Activated B cell treated with CpG ODN at 0.5 μM for 24 hours (primary cell): ENCODE measurements at regions of chr16 and their contacts with region 1.

Region 1: DNA sequence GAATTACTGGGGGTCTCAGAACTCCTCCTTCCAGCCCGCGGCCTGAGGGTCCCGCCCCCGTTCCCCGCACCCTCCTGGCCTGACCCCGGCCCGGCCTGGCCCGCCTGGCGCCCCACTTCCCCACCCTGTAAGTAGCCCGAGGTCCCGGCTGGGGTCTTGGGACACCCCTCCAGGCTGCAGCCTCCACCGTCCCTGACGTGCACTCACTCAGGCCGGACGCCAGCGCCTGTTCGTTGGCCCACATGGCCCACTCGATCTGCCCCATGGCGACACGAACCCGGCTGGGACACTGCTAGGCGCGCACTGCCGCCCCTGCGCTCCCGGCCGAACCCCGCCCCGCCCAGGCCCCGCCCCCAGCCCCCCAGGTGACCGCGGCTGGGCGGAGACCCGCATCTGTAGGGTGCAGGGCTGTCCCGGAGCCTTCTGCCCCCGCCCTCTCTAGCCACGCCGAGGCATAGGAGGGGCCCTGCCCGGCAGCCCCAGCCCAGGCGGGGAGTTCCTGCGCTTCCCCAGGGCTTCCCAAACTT is at the start of gene CYBA:
- DNase-seq: no peak
- ATAC-seq: peak; percentile 81
- H3K4me3 Mint-ChIP-seq: peak within 1 kb of the TSS; percentile 93
- H3K27ac Mint-ChIP-seq: peak within 1 kb of the TSS; percentile 93
- H3K4me1 Mint-ChIP-seq: peaks cover 50% of the 10 kb centered on the region
- H3K27me3 Mint-ChIP-seq: no peaks in the 10 kb centered on the region
- CTCF ChIP-seq: no peak
- total RNA-seq, gene CYBA: 432 and 456 TPM in 2 replicates

Region 2: DNA sequence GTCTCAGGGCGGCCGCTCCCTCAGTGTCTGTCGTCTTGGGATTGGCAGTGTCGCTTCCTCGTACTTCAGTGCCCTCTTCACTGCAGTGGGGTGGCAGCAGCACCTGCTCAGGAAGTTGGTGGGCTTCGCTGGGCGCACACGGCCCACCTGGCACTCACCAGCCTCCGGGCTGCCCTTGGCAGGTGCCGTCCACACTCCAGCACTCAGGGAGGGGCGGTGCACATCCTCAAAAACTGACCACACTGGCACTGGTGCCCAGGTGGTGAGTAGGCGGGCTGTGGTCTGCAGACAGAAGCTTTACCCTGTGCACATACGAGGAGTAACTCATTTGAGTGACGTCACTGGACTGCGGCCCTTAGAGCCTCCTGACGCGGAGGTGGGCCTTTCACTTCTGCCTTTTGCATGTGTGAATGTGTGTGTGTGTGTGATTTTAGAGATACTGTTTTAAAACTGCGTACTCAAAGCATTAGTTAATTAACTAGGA is 605.0 kb before region 1 on chr16:
- CTCF ChIA-PET with region 1: no interaction called
- POLR2A ChIA-PET with region 1: no interaction called
- intact Hi-C with region 1: loop called (anchors 1 kb)
- DNase-seq: peak; percentile 83
- ATAC-seq: peak; percentile 72
- H3K4me3 Mint-ChIP-seq: peak overlapping the region; percentile 77
- H3K27ac Mint-ChIP-seq: peak overlapping the region; percentile 98
- H3K4me1 Mint-ChIP-seq: peaks cover 83% of the 10 kb centered on the region
- H3K27me3 Mint-ChIP-seq: no peaks in the 10 kb centered on the region
- CTCF ChIP-seq: no peak

Region 3: DNA sequence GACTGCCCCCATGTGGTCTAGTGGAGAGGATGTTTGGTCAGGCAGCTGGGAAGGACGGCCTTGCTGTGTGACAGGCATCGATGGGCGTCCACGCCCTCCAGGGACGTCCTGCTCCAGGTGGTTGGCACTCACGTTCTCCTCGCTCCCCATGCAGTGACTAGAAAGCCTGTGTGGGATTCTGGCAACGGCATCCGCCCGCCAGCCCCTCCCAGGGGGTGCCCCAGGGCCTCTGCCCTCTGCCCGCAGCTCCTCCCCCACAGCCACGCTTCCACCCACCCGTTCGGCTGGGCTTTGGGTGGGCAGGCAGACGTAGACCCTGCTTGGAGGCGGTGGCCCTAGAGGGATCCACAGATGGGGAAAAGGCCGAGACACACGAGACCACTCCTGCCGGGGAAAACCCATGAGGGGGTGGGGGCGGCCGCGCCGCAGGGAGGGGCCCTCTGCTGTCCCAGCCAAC is 17.1 kb before region 1 on chr16:
- CTCF ChIA-PET with region 1: interaction called, 3 read pairs
- POLR2A ChIA-PET with region 1: interaction called, 102 read pairs
- intact Hi-C with region 1: loop called (anchors 1 kb)
- DNase-seq: peak; percentile 64
- ATAC-seq: peak; percentile 54
- H3K4me3 Mint-ChIP-seq: peak overlapping the region; percentile 76
- H3K27ac Mint-ChIP-seq: peak overlapping the region; percentile 71
- H3K4me1 Mint-ChIP-seq: peaks cover 46% of the 10 kb centered on the region
- H3K27me3 Mint-ChIP-seq: no peaks in the 10 kb centered on the region
- CTCF ChIP-seq: no peak

Region 4: GRCh38 chr16:88686439-88687253 is 35.8 kb after region 1 on chr16 and contains the start of gene SNAI3:
- CTCF ChIA-PET with region 1: interaction called, 5 read pairs
- POLR2A ChIA-PET with region 1: interaction called, 25 read pairs
- intact Hi-C with region 1: loop called (anchors 1 kb)
- DNase-seq: peak; percentile 94
- ATAC-seq: peak; percentile 74
- H3K4me3 Mint-ChIP-seq: peak within 1 kb of the TSS; percentile 83
- H3K27ac Mint-ChIP-seq: no peak within 1 kb of the TSS
- H3K4me1 Mint-ChIP-seq: peaks cover 46% of the 10 kb centered on the region
- H3K27me3 Mint-ChIP-seq: no peaks in the 10 kb centered on the region
- CTCF ChIP-seq: no peak
- total RNA-seq, gene SNAI3: 1.5 and 2.7 TPM in 2 replicates

Region 5: GRCh38 chr16:88803264-88803987 is 152.6 kb after region 1 on chr16 and contains the start of gene CDT1:
- CTCF ChIA-PET with region 1: no interaction called
- POLR2A ChIA-PET with region 1: no interaction called
- intact Hi-C with region 1: loop called (anchors 2 kb)
- DNase-seq: peak; percentile 88
- ATAC-seq: peak; percentile 64
- H3K4me3 Mint-ChIP-seq: peak within 1 kb of the TSS; percentile 79
- H3K27ac Mint-ChIP-seq: peak within 1 kb of the TSS; percentile 79
- H3K4me1 Mint-ChIP-seq: peaks cover 22% of the 10 kb centered on the region
- H3K27me3 Mint-ChIP-seq: no peaks in the 10 kb centered on the region
- CTCF ChIP-seq: no peak
- total RNA-seq, gene CDT1: 4.3 and 5.5 TPM in 2 replicates

Region 6: GRCh38 chr16:89060207-89060794 is 409.5 kb after region 1 on chr16:
- CTCF ChIA-PET with region 1: no interaction called
- POLR2A ChIA-PET with region 1: no interaction called
- intact Hi-C with region 1: loop called (anchors 1 kb)
- DNase-seq: peak; percentile 55
- ATAC-seq: peak; percentile 81
- H3K4me3 Mint-ChIP-seq: peak overlapping the region; percentile 68
- H3K27ac Mint-ChIP-seq: peak overlapping the region; percentile 89
- H3K4me1 Mint-ChIP-seq: peaks cover 50% of the 10 kb centered on the region
- H3K27me3 Mint-ChIP-seq: no peaks in the 10 kb centered on the region
- CTCF ChIP-seq: no peak